HEK293T (cell line): ENCODE measurements at regions of chr18 and their contacts with region 1.

Region 1: DNA sequence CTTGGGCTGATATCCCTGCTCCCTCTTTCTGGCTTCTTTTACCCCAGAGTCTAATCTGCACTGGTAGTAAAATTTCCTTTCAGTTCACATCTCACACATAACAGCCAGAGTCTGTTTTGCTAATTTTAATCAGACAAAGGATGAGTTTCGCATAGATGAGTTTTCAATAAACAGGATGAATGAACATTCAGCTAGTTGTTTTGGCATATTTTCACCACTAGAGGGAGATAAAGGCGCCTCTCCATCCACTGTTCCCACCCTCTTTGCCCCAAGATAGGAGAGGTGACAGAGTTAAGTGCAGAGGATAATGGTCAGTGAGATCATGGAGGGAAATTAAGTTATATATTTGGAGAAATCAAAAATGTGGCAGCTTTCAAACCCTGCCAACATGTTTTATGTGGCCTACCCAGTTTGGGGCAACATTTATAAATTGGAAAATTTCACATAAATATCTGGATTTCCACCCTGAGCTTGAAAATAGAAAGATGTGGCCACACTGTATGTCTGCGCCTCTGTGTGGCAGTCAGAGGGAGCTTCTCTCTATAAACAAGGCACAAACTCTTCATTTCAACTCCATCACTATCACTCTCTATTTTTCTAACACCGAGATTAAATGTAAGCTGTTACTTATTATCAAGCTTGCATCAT is 48.5 kb upstream of the DTNA start:
- DNase-seq: peak; percentile 86

Region 2: DNA sequence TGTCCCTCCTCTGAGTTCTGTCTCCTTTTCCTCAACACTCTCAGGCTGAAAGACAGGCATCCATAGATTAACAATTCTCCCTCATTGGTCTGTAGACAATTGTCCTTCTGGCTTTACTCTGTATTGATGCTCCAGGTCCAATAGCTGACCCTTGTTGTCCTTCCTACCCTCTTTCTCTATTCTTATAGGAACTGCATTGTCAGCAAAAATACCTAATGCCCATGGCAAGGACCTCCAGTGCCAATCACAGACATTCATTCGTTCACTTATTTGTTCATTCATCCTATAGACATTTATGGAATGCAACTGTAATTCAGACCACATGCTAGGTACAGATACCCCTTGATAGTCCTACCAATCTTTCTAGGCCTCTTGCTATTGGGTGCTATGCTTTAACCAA is 21.3 kb before region 1 on chr18:
- CTCF ChIA-PET with region 1: interaction called, 20 read pairs
- POLR2A ChIA-PET with region 1: no interaction called
- DNase-seq: no peak

Region 3: DNA sequence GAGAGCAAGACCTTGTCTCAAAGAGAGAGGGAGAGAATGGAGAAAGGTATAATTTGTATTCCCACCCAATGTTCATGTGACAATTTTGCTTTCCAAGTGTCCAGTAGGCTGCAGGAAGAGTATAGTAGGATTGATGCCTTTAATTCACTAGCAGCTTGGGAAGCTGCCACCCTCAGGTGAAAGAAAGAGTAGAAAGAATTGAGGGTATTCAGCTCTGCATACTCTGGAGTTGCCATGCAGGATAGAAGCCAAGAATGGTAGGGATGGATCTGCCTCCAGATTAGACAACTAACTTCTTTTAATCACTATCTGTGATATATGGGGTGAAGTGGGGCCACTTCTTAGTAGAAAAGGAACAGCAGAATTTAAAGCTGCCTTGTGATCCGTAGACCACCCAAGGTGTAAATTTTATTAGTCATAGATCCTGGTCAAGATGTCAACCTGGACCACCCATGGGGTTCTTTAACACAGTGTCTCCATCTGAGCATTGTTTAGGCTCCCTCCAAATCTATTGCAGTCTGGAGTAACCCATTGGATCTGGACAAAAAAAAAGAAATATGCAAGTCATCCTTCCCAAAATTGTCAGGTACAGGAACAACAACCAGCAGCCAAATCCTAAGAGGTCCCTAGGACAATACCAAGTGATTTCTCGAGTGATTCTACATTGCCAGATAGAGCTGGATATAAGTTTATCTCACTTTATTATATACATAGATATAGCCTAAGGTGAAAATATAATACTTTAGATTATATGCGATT is 15.4 kb after region 1 on chr18:
- CTCF ChIA-PET with region 1: interaction called, 37 read pairs
- POLR2A ChIA-PET with region 1: interaction called, 3 read pairs
- DNase-seq: no peak

Region 4: DNA sequence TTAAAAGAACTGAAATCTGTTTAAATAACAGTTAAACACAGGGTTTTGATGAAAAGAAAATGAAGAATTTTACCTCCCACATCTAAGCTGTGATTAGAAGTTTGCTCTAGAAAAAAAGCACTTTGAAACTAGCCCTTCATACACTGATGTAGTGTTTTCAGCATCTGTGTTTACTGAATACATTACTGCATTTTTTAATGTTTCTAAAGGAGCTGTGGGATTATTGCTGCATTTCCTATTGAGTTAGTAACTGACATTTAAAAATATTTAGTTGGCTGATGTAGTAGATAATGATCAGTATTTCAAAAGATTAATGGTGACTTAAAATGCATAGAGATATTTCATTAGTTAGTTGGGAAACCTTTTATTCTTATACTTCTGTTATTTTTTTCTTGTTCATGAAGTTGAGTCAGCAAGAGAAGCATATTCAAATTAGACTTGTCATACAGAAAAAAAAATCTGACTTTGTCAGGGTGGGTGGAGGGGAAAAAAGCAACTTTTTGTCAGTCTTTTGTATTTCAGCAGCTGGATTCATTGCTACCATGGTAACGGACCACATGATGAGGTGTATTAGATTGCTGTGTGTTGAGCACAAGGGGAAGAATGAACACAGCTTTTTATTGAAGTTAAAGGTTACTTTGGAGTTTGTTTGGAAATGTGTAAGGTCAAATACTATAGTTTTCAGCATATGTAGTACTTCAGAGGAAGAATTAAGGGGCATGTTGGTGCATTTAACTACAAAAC is 48.3 kb after region 1 on chr18 and contains the start of gene DTNA:
- CTCF ChIA-PET with region 1: interaction called, 12 read pairs
- POLR2A ChIA-PET with region 1: no interaction called
- DNase-seq: peak; percentile 50

Region 5: DNA sequence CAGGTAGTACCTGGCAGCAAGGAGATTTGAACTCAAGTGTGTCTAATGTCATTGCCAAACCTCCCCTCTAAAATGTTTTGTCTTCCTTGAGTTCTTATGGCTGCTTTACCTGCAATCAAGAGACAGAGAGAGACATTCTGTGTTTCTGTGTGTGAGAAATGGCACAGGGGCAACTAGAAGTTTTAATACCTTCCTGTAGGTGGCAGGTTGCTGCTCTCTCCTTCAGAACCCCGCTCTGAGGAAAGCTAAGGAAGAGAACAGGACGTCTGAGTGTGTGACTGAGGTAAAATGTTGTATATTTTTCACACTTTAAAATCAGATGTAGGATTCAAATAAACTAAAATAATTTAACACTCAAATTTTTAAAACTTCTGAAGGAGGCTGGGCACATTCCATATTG is 67.7 kb after region 1 on chr18:
- CTCF ChIA-PET with region 1: interaction called, 12 read pairs
- POLR2A ChIA-PET with region 1: no interaction called
- DNase-seq: peak; percentile 75

Region 6: GRCh38 chr18:34971313-34971712 is 309.7 kb after region 1 on chr18:
- CTCF ChIA-PET with region 1: no interaction called
- POLR2A ChIA-PET with region 1: no interaction called
- DNase-seq: no peak